GM12878 (cell line): ENCODE measurements at regions of chr6 and their contacts with region 1.

Region 1: GRCh38 chr6:2738373-2738979 is 12.2 kb downstream of the MYLK4 start:
- DNase-seq: no peak
- ATAC-seq: peak; percentile 82
- H3K4me3 ChIP-seq: no peak overlapping the region
- H3K27ac ChIP-seq: no peak overlapping the region
- H3K4me1 ChIP-seq: 0 out of 2 replicates have a peak, but pooled peaks cover 2% of the 10 kb centered on the region
- H3K27me3 ChIP-seq: peaks cover 1 to 6% of the 10 kb centered on the region in 2 experiments; a peak in 2 of 4 replicates
- CTCF ChIP-seq: peak; percentile 68 to 82 (median 71)
- EP300 ChIP-seq: no peak
- POLR2A ChIP-seq: no peak
- RAD21 ChIP-seq: peak; percentile 93

Region 2: DNA sequence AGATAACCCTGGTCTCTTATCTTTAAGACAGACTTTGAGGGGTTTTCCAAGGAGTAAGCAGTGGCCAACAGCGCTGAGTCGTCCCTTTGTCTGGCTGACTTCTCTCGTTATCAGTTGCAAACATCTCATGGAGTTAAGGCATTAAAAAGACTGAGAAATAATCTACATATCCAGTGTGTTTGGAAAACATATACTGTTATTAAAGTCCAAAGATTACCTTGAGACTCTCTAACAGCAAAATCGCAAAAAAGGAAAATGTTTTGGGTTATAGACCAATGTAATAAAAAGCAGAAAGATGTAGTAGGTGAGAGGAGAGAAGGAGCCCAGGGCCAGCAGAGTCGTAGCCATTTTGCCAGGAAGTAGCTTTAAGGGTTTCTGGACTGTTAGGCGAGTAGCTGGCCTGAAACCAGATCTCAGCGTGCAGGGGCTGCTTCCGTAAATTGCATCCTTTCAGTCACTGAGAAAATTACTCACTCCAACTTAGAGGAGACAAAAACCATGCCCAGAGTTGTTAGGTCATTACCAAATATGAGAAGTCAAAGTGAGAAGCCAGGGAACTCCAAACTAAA is 12.4 kb before region 1 on chr6:
- CTCF ChIA-PET with region 1: interaction called, 16 read pairs
- POLR2A ChIA-PET with region 1: no interaction called
- RAD21 ChIA-PET with region 1: interaction called, 3 read pairs
- SMC1A ChIA-PET with region 1: interaction called, 4 read pairs
- in situ Hi-C with region 1: no loop called
- intact Hi-C with region 1: no loop called
- DNase-seq: peak; percentile 28
- ATAC-seq: peak; percentile 96
- H3K4me3 ChIP-seq: no peak overlapping the region
- H3K27ac ChIP-seq: no peak overlapping the region
- H3K4me1 ChIP-seq: no peaks in the 10 kb centered on the region
- H3K27me3 ChIP-seq: peaks cover 0 to 1% of the 10 kb centered on the region in 2 experiments; a peak in 1 of 4 replicates
- CTCF ChIP-seq: no peak
- EP300 ChIP-seq: no peak
- POLR2A ChIP-seq: 0 out of 2 replicates have a peak, but pooled peaks have one; percentile 40
- RAD21 ChIP-seq: no peak

Region 3: GRCh38 chr6:2749969-2750600 is 11.6 kb after region 1 on chr6:
- CTCF ChIA-PET with region 1: interaction called, 85 read pairs
- POLR2A ChIA-PET with region 1: no interaction called
- RAD21 ChIA-PET with region 1: interaction called, 14 read pairs
- SMC1A ChIA-PET with region 1: interaction called, 30 read pairs
- in situ Hi-C with region 1: no loop called
- intact Hi-C with region 1: loop called (anchors 1 kb)
- DNase-seq: no peak
- ATAC-seq: peak; percentile 63
- H3K4me3 ChIP-seq: no peak overlapping the region
- H3K27ac ChIP-seq: no peak overlapping the region
- H3K4me1 ChIP-seq: no peaks in the 10 kb centered on the region
- H3K27me3 ChIP-seq: peaks cover 4 to 7% of the 10 kb centered on the region in 2 experiments; a peak in 3 of 4 replicates
- CTCF ChIP-seq: peak; percentile 68 to 75 (median 69)
- EP300 ChIP-seq: no peak
- POLR2A ChIP-seq: no peak
- RAD21 ChIP-seq: peak; percentile 50; the same call in 1 of the 2 replicates

Region 4: GRCh38 chr6:2756687-2757224 is 18.3 kb after region 1 on chr6:
- CTCF ChIA-PET with region 1: interaction called, 85 read pairs
- POLR2A ChIA-PET with region 1: no interaction called
- RAD21 ChIA-PET with region 1: interaction called, 14 read pairs
- SMC1A ChIA-PET with region 1: interaction called, 30 read pairs
- in situ Hi-C with region 1: no loop called
- intact Hi-C with region 1: no loop called
- DNase-seq: no peak
- ATAC-seq: no peak
- H3K4me3 ChIP-seq: no peak overlapping the region
- H3K27ac ChIP-seq: no peak overlapping the region
- H3K4me1 ChIP-seq: no peaks in the 10 kb centered on the region
- H3K27me3 ChIP-seq: peaks cover 0 to 8% of the 10 kb centered on the region in 2 experiments; a peak in 2 of 4 replicates
- CTCF ChIP-seq: no peak
- EP300 ChIP-seq: no peak
- POLR2A ChIP-seq: no peak
- RAD21 ChIP-seq: no peak

Region 5: DNA sequence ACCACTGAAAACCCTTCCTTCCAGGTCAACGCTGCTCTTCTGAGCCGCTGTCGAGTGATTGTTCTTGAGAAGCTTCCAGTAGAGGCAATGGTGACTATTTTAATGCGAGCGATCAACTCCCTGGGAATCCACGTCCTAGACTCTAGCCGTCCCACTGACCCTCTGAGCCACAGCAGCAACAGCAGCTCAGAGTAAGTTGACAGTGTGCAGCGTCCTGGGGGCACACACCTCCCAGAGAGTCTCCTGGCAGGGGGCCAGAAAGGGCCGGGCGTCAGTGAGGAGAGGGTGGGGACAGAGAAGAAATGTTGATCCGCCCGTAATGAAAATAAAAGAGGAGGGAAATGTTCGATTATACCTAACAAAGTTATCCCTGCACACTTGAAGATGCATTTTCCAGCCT is 31.7 kb after region 1 on chr6:
- CTCF ChIA-PET with region 1: interaction called, 11 read pairs
- POLR2A ChIA-PET with region 1: no interaction called
- RAD21 ChIA-PET with region 1: interaction called, 4 read pairs
- SMC1A ChIA-PET with region 1: interaction called, 4 read pairs
- in situ Hi-C with region 1: no loop called
- intact Hi-C with region 1: no loop called
- DNase-seq: no peak
- ATAC-seq: no peak
- H3K4me3 ChIP-seq: no peak overlapping the region
- H3K27ac ChIP-seq: no peak overlapping the region
- H3K4me1 ChIP-seq: peaks cover 11% of the 10 kb centered on the region
- H3K27me3 ChIP-seq: no peaks in the 10 kb centered on the region
- CTCF ChIP-seq: no peak
- EP300 ChIP-seq: no peak
- POLR2A ChIP-seq: no peak
- RAD21 ChIP-seq: no peak

Region 6: GRCh38 chr6:2988426-2989331 is 250.2 kb after region 1 on chr6:
- CTCF ChIA-PET with region 1: interaction called, 5 read pairs
- POLR2A ChIA-PET with region 1: no interaction called
- RAD21 ChIA-PET with region 1: no interaction called
- SMC1A ChIA-PET with region 1: interaction called, 5 read pairs
- in situ Hi-C with region 1: no loop called
- intact Hi-C with region 1: loop called (anchors 1 kb)
- DNase-seq: no peak
- ATAC-seq: peak; percentile 92
- H3K4me3 ChIP-seq: peak overlapping the region; percentile 71
- H3K27ac ChIP-seq: peak overlapping the region; percentile 79
- H3K4me1 ChIP-seq: peaks cover 13% of the 10 kb centered on the region
- H3K27me3 ChIP-seq: peaks cover 0 to 2% of the 10 kb centered on the region in 2 experiments; a peak in 3 of 4 replicates
- CTCF ChIP-seq: peak; percentile 56 to 75 (median 73)
- EP300 ChIP-seq: no peak; a peak in 1 of 4 replicates
- POLR2A ChIP-seq: peak; percentile 64
- RAD21 ChIP-seq: peak; percentile 73